Tibial artery (tissue), 4 donors: ENCODE measurements at regions of chr13 and their contacts with region 1.

Region 1: GRCh38 chr13:21501686-21502085 is 42.6 kb upstream of the ZDHHC20 start:
- DNase-seq: no peak
- H3K4me3 ChIP-seq: no peak overlapping the region
- H3K27ac ChIP-seq: no peak overlapping the region
- H3K4me1 ChIP-seq: no peaks in the 10 kb centered on the region
- H3K27me3 ChIP-seq: no peaks in the 10 kb centered on the region
- CTCF ChIP-seq: no peak

Region 2: GRCh38 chr13:21359855-21360254 is 141.8 kb before region 1 on chr13:
- intact Hi-C with region 1: no loop called
- DNase-seq: no peak
- H3K4me3 ChIP-seq: no peak overlapping the region
- H3K27ac ChIP-seq: no peak overlapping the region
- H3K4me1 ChIP-seq: no peaks in the 10 kb centered on the region
- H3K27me3 ChIP-seq: no peaks in the 10 kb centered on the region
- CTCF ChIP-seq: no peak

Region 3: DNA sequence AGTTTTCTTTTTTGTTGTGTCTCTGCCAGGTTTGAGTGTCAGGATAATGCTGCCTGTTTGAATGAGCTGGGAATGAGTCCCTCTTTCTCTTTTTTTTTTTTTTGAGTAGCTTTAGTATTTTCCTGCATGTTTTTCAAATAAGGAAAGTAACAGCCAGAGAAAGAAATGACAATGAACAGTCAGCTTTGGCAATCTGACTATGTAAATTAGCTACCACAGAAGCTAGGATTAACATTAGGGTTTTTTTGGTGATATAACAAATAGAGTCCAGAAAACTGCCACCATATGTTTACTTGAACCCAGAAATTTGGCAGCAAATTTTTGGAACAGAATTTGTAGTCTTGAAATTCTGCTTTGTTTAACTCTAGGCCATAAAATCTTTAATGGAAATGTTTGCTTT is 1729.6 kb after region 1 on chr13:
- intact Hi-C with region 1: loop called (anchors 5 kb)
- DNase-seq: no peak
- H3K4me3 ChIP-seq: no peak overlapping the region
- H3K27ac ChIP-seq: no peak overlapping the region
- H3K4me1 ChIP-seq: no peaks in the 10 kb centered on the region
- H3K27me3 ChIP-seq: no peaks in the 10 kb centered on the region
- CTCF ChIP-seq: no peak